ENCODE measurements at regions of chr9 and their contacts with region 1.

Region 1: GRCh38 chr9:35790385-35791296 is 750 bp upstream of the NPR2 start:
- DNase-seq: peak; percentile 78
- H3K4me3 ChIP-seq: peak overlapping the region in 1 of 3 experiments; percentile 11
- H3K27ac ChIP-seq: no peak overlapping the region
- H3K4me1 ChIP-seq: peaks cover 28% of the 10 kb centered on the region
- H3K27me3 ChIP-seq: no peaks in the 10 kb centered on the region
- CTCF ChIP-seq: peak; percentile 76 to 84
- POLR2A ChIP-seq: no peak

Region 2: GRCh38 chr9:35703906-35704672 is 86.6 kb before region 1 on chr9:
- CTCF ChIA-PET with region 1: no interaction called
- POLR2A ChIA-PET with region 1: no interaction called
- dilution Hi-C with region 1: no loop called
- intact Hi-C with region 1: no loop called
- DNase-seq: no peak
- H3K4me3 ChIP-seq: no peak overlapping the region
- H3K27ac ChIP-seq: no peak overlapping the region
- H3K4me1 ChIP-seq: no peaks in the 10 kb centered on the region
- H3K27me3 ChIP-seq: no peaks in the 10 kb centered on the region
- CTCF ChIP-seq: no peak
- POLR2A ChIP-seq: no peak

Region 3: GRCh38 chr9:35748858-35749514 is 41.7 kb before region 1 on chr9 and contains the starts of genes GBA2 and RGP1:
- CTCF ChIA-PET with region 1: interaction called, 48 read pairs
- POLR2A ChIA-PET with region 1: interaction called, 9 read pairs
- dilution Hi-C with region 1: no loop called
- intact Hi-C with region 1: loop called (anchors 1 kb)
- DNase-seq: peak; percentile 75
- H3K4me3 ChIP-seq: peak within 1 kb of the TSS; percentile 66 to 99 (median 87)
- H3K27ac ChIP-seq: peak within 1 kb of the TSS; percentile 84
- H3K4me1 ChIP-seq: peaks cover 69% of the 10 kb centered on the region
- H3K27me3 ChIP-seq: no peaks in the 10 kb centered on the region
- CTCF ChIP-seq: no peak
- POLR2A ChIP-seq: peak; percentile 72
- total RNA-seq, gene GBA2: 158 and 196 TPM in 2 replicates
- total RNA-seq, gene RGP1: 23.3 and 29.0 TPM in 2 replicates

Region 4: GRCh38 chr9:35814841-35815543 is 24.4 kb after region 1 on chr9 and contains the start of gene HINT2:
- CTCF ChIA-PET with region 1: interaction called, 130 read pairs
- POLR2A ChIA-PET with region 1: no interaction called
- dilution Hi-C with region 1: no loop called
- intact Hi-C with region 1: loop called (anchors 1 kb)
- DNase-seq: peak; percentile 99
- H3K4me3 ChIP-seq: peak within 1 kb of the TSS; percentile 83 to 89 (median 85)
- H3K27ac ChIP-seq: peak within 1 kb of the TSS; percentile 44
- H3K4me1 ChIP-seq: peaks cover 21% of the 10 kb centered on the region
- H3K27me3 ChIP-seq: no peaks in the 10 kb centered on the region
- CTCF ChIP-seq: no peak
- POLR2A ChIP-seq: peak; percentile 93
- total RNA-seq, gene HINT2: 27.2 and 37.4 TPM in 2 replicates

Region 5: GRCh38 chr9:35835216-35835632 is 44.6 kb after region 1 on chr9:
- CTCF ChIA-PET with region 1: interaction called, 10 read pairs
- POLR2A ChIA-PET with region 1: no interaction called
- dilution Hi-C with region 1: no loop called
- intact Hi-C with region 1: no loop called
- DNase-seq: no peak
- H3K4me3 ChIP-seq: no peak overlapping the region
- H3K27ac ChIP-seq: no peak overlapping the region
- H3K4me1 ChIP-seq: no peaks in the 10 kb centered on the region
- H3K27me3 ChIP-seq: peaks cover 0 to 12% of the 10 kb centered on the region in 2 experiments
- CTCF ChIP-seq: peak; percentile 24 to 27
- POLR2A ChIP-seq: no peak

Region 6: DNA sequence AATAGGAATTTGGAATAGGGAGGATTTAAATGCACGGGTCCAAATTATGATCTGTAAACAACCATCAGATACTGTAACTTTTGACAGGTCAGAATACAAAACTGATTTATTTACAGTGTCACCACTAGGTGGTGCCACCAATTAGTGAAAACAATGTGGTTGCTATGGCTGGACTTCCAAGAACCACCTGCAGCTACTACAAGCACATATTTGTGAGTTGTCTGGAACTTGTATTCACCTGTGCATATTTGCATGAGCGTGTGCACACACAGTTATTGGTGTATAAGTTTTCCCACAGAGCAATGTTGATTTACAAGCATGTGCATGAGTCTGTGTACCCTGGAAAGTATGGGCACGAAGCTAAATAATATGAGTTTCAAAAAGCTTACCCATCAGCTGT is 112.4 kb after region 1 on chr9:
- CTCF ChIA-PET with region 1: interaction called, 22 read pairs
- POLR2A ChIA-PET with region 1: no interaction called
- dilution Hi-C with region 1: no loop called
- intact Hi-C with region 1: loop called (anchors 1 kb)
- DNase-seq: peak; percentile 67
- H3K4me3 ChIP-seq: no peak overlapping the region
- H3K27ac ChIP-seq: no peak overlapping the region
- H3K4me1 ChIP-seq: peaks cover 35% of the 10 kb centered on the region
- H3K27me3 ChIP-seq: no peaks in the 10 kb centered on the region
- CTCF ChIP-seq: peak; percentile 48 to 62
- POLR2A ChIP-seq: no peak

Region 7: DNA sequence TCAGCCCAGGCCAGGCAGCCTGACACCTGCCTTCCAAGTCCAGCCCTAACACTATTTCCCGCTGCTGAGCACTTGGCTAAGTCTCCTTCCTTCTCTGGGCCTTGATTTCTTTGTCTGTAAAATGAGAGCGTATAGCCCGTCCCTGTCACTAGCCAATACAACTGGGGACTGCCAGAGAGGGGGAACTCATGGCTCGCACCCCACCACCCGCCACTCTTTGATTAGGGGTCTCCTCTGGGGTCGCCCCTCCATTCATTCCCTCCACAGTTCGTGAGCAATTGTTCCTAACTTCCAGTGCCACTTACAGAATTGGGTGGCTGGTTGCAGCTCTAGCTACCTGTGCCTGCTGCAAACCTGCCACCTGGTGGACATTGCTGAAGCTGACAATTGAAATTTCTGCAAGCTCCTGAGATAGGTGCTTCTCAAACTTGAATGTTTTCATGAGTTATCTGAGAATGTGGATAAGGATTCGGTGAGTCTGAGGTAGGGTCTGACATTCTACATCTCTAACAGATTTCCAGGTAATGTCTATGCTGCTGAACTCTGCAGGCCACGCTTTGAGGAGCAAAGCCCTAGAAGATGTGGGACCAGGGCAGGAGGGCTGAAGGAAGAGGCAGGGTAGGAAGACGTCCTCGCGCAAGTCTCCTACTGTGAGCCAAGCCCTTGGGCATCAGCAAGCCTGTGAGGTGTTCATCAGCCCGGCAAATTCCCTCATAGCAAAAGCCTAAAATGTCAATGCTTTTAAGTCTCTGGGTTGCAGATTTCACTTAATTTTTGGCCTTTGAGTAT is 232.8 kb after region 1 on chr9:
- CTCF ChIA-PET with region 1: interaction called, 25 read pairs
- POLR2A ChIA-PET with region 1: no interaction called
- dilution Hi-C with region 1: no loop called
- intact Hi-C with region 1: loop called (anchors 1 kb)
- DNase-seq: peak; percentile 71
- H3K4me3 ChIP-seq: no peak overlapping the region
- H3K27ac ChIP-seq: no peak overlapping the region
- H3K4me1 ChIP-seq: no peaks in the 10 kb centered on the region
- H3K27me3 ChIP-seq: no peaks in the 10 kb centered on the region
- CTCF ChIP-seq: peak; percentile 71 to 79
- POLR2A ChIP-seq: no peak

Region 8: DNA sequence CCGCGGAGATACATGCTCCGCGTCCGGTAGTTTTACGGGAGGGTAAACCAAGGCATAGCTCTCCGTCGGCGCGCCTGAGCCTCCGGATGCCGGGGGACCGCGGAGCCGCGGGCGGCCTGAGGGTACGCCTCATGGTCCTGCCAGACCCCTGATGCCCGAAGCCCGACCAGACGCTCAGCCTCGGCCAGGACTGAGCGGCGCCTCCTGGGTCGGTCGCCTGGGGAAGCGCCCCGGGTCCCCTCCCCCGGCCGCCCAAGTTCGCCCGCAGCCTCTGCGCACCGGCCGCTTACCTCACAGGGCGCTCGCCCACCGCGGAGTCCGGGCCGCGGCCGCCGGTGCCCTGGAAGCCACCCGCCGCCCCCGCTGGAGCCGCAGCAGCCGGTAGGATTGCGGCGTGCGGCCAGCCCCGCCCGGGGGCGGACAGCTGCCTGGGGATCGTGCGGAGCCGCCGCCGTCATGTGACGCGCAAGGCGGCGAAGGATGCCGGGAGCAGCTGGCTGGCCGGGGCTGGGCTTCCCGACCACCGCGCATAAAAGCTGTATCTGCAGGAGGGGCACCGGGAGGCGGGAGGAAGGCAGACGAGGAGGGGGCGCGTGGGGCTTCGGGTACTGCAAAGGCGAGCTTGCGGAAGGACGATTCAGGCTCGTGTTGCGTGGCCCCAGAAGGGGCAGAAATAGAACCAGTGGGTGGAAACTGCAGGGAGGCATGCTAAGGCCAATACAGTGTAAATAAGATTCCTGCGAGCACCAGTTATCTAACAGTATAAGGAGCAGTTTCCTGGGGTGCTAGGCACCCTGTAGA is 1785.5 kb after region 1 on chr9 and contains the start of gene FBXO10:
- CTCF ChIA-PET with region 1: no interaction called
- POLR2A ChIA-PET with region 1: no interaction called
- dilution Hi-C with region 1: no loop called
- intact Hi-C with region 1: no loop called
- DNase-seq: peak; percentile 78
- H3K4me3 ChIP-seq: peak within 1 kb of the TSS; percentile 68 to 85 (median 70)
- H3K27ac ChIP-seq: peak within 1 kb of the TSS; percentile 45
- H3K4me1 ChIP-seq: peaks cover 21% of the 10 kb centered on the region
- H3K27me3 ChIP-seq: no peaks in the 10 kb centered on the region
- CTCF ChIP-seq: no peak
- POLR2A ChIP-seq: peak; percentile 70
- total RNA-seq, gene FBXO10: 13.8 and 14.4 TPM in 2 replicates

Measured in endothelial cell of umbilical vein (primary cell).